Endothelial cell of umbilical vein (primary cell): ENCODE measurements at regions of chr5 and their contacts with region 1.

Region 1: GRCh38 chr5:173057062-173057924 is 1.1 kb downstream of the CREBRF start:
- DNase-seq: peak; percentile 99
- H3K4me3 ChIP-seq: peak overlapping the region; percentile 83 to 89 (median 86)
- H3K27ac ChIP-seq: peak overlapping the region; percentile 86
- H3K4me1 ChIP-seq: peaks cover 13% of the 10 kb centered on the region
- H3K27me3 ChIP-seq: no peaks in the 10 kb centered on the region
- CTCF ChIP-seq: peak in 1 of 2 donors; percentile 28
- POLR2A ChIP-seq: peak; percentile 37

Region 2: GRCh38 chr5:172958331-172959046 is 98.8 kb before region 1 on chr5:
- CTCF ChIA-PET with region 1: no interaction called
- POLR2A ChIA-PET with region 1: no interaction called
- dilution Hi-C with region 1: no loop called
- intact Hi-C with region 1: loop called (anchors 1 kb)
- DNase-seq: peak; percentile 58
- H3K4me3 ChIP-seq: peak overlapping the region; percentile 59 to 66 (median 63)
- H3K27ac ChIP-seq: peak overlapping the region; percentile 59
- H3K4me1 ChIP-seq: peaks cover 22% of the 10 kb centered on the region
- H3K27me3 ChIP-seq: no peaks in the 10 kb centered on the region
- CTCF ChIP-seq: no peak
- POLR2A ChIP-seq: no peak

Region 3: DNA sequence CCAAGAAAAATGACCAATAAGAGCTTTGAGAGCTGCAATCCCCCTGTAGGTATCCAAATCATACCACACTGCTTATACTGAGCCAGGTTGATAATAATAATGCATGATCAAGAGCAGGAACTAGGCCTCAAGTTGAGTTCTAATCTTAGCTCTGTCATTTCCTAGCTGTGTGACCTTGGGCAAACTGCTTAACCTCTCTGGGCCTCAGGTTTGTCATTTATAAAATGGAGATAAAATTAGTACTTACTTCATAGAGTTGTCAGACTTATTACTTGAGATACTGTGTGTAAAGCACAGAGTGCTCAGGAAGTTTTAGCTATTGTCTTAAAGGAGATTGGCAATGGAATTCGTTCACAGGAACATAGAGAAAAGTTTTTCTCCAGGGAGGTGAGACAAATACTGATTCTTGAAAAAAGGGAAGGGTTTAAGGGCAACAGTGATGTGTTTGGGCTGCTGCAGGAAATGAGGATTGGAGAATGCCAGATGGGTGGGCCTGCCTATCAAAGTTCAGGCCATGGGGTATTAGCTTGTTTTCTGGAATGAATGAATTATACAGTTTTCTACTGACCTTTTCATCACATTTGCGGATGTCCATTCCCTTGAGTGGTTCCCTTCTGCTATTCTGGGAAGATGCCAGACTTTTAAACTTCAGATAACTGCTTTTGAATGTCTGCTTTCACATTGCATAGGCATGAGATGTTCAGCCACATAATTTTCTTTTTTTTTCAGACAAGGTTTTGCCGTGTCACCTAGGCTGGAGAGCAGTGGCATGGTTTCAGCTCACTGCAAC is 84.0 kb before region 1 on chr5:
- CTCF ChIA-PET with region 1: no interaction called
- POLR2A ChIA-PET with region 1: no interaction called
- dilution Hi-C with region 1: no loop called
- intact Hi-C with region 1: no loop called
- DNase-seq: peak; percentile 16
- H3K4me3 ChIP-seq: no peak overlapping the region
- H3K27ac ChIP-seq: no peak overlapping the region
- H3K4me1 ChIP-seq: no peaks in the 10 kb centered on the region
- H3K27me3 ChIP-seq: no peaks in the 10 kb centered on the region
- CTCF ChIP-seq: no peak
- POLR2A ChIP-seq: no peak

Region 4: GRCh38 chr5:173029499-173029921 is 27.8 kb before region 1 on chr5:
- CTCF ChIA-PET with region 1: interaction called, 4 read pairs
- POLR2A ChIA-PET with region 1: no interaction called
- dilution Hi-C with region 1: no loop called
- intact Hi-C with region 1: loop called (anchors 2 kb)
- DNase-seq: peak; percentile 76
- H3K4me3 ChIP-seq: no peak overlapping the region
- H3K27ac ChIP-seq: peak overlapping the region; percentile 14
- H3K4me1 ChIP-seq: peaks cover 26% of the 10 kb centered on the region
- H3K27me3 ChIP-seq: no peaks in the 10 kb centered on the region
- CTCF ChIP-seq: no peak
- POLR2A ChIP-seq: no peak

Region 5: DNA sequence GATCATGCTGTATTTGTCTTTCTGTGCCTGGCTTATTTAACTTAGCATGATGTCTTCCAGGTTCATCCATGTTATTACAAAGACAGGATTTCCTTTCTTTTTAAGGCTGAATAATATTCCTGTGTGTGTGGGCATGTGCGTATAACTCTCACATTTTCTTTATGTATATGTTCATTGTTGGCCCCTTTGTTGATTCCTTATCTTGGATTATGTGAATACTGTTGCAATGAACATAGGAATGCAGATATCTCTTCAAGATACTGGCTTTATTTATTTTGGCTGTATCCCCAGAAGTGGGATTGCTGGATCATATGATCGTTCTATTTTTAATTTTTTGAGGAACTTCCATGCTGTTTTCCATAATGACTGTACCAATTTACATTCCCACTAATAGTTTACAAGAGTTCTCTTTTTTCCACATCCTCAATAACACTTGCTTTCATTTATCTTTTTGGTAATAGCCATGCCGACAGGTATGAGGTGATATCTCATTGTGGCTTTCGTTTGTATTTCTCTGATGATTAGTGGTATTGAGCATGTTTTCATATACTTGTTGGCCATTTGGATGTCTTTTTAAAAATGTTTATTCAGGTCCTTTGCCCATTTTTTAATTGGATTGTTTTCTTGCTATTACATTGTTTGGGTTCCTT is 36.8 kb after region 1 on chr5:
- CTCF ChIA-PET with region 1: no interaction called
- POLR2A ChIA-PET with region 1: no interaction called
- dilution Hi-C with region 1: no loop called
- intact Hi-C with region 1: loop called (anchors 1 kb)
- DNase-seq: peak; percentile 97
- H3K4me3 ChIP-seq: no peak overlapping the region
- H3K27ac ChIP-seq: peak overlapping the region; percentile 65
- H3K4me1 ChIP-seq: peaks cover 21% of the 10 kb centered on the region
- H3K27me3 ChIP-seq: no peaks in the 10 kb centered on the region
- CTCF ChIP-seq: no peak
- POLR2A ChIP-seq: no peak

Region 6: DNA sequence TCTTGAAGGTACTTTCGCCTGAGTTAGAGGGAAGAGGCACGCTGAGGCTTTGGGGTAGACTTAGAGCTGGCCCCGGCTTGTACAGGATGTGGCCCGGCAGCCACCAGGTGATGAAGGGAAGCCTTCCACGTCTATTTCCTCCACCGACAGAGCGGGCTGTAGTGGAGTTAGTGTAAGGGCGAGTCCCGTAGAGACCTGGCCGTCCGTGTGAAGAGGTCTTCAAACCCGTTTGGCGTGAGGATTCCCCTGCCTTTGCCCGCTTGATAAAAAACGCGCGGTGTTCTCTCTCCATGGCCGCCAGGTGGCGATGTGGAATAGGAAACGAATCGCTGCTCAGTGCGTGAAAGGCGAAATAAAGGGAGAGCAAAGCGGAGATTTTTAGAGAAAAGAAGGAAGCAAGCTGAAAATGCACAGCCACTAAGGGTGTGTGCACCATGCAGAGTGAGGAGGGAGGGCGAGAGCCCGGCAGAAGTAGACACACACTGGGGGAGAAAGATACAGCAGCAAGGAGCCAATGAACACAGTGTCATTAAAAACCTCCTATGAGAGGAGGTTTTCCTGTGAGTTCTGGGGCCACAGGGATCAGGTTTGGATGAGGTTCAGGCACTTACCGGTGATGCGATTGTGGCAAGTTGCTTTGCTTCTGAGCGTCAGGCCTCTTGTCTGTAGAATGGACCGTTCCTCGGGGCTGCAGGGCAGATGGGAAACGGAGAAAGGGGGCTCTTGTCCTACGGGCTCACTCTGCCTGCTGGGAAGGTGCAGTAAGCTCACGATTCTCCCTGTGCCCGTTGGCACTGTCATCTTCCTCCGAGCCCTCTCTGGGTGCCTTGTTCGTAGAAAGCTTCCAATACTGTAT is 236.8 kb after region 1 on chr5:
- CTCF ChIA-PET with region 1: interaction called, 3 read pairs
- POLR2A ChIA-PET with region 1: no interaction called
- dilution Hi-C with region 1: no loop called
- intact Hi-C with region 1: loop called (anchors 5 kb)
- DNase-seq: peak; percentile 75
- H3K4me3 ChIP-seq: no peak overlapping the region
- H3K27ac ChIP-seq: no peak overlapping the region
- H3K4me1 ChIP-seq: peaks cover 22% of the 10 kb centered on the region
- H3K27me3 ChIP-seq: no peaks in the 10 kb centered on the region
- CTCF ChIP-seq: peak; percentile 77 to 85
- POLR2A ChIP-seq: no peak